Mammary epithelial cell (primary cell): ENCODE measurements at regions of chr4 and their contacts with region 1.

Region 1: GRCh38 chr4:109032671-109033070 is 269.8 kb downstream of the COL25A1 start:
- DNase-seq: no peak
- H3K4me3 ChIP-seq: no peak overlapping the region
- H3K27ac ChIP-seq: no peak overlapping the region
- H3K4me1 ChIP-seq: no peaks in the 10 kb centered on the region
- H3K27me3 ChIP-seq: no peaks in the 10 kb centered on the region
- CTCF ChIP-seq: no peak

Region 2: DNA sequence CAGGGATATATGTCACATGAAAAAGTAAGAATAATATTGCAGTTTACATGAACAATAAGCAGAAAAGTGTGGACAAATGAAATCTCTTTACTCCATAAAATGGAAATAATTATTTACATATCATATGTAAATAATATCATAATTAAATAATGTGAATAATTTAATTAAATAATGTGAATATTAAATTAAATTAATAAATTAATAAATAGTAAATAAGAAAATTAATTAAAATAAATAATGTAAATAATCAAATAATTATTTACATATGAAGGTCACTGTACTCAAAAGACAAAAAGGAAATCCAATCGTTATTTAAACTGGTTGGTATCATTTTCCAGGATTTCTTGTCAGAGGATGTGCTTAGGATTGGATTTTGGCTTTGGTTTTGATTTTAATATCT is 68.8 kb before region 1 on chr4:
- CTCF ChIA-PET with region 1: no interaction called
- dilution Hi-C with region 1: loop called (anchors 5 kb)
- in situ Hi-C with region 1: no loop called
- intact Hi-C with region 1: no loop called
- DNase-seq: no peak
- H3K4me3 ChIP-seq: no peak overlapping the region
- H3K27ac ChIP-seq: no peak overlapping the region
- H3K4me1 ChIP-seq: no peaks in the 10 kb centered on the region
- H3K27me3 ChIP-seq: peaks cover 4% of the 10 kb centered on the region
- CTCF ChIP-seq: no peak

Region 3: GRCh38 chr4:109327641-109328040 is 295.0 kb after region 1 on chr4:
- CTCF ChIA-PET with region 1: no interaction called
- dilution Hi-C with region 1: no loop called
- in situ Hi-C with region 1: no loop called
- intact Hi-C with region 1: no loop called
- DNase-seq: no peak
- H3K4me3 ChIP-seq: no peak overlapping the region
- H3K27ac ChIP-seq: no peak overlapping the region
- H3K4me1 ChIP-seq: no peaks in the 10 kb centered on the region
- H3K27me3 ChIP-seq: no peaks in the 10 kb centered on the region
- CTCF ChIP-seq: no peak